Vagina (tissue), 2 donors: ENCODE measurements at regions of chr12 and their contacts with region 1.

Region 1: GRCh38 chr12:8081251-8081920 is 688 bp upstream of the NECAP1 start:
- DNase-seq: no peak
- H3K4me3 ChIP-seq: peak overlapping the region; percentile 92 to 94
- H3K27ac ChIP-seq: peak overlapping the region; percentile 96
- H3K4me1 ChIP-seq: peaks cover 33% of the 10 kb centered on the region
- H3K27me3 ChIP-seq: no peaks in the 10 kb centered on the region
- CTCF ChIP-seq: no peak
- POLR2A ChIP-seq: no peak

Region 2: GRCh38 chr12:8032242-8033152 is 48.9 kb before region 1 on chr12 and contains the start of gene FOXJ2:
- intact Hi-C with region 1: loop called (anchors 10 kb)
- DNase-seq: no peak
- H3K4me3 ChIP-seq: peak within 1 kb of the TSS; percentile 90 to 97
- H3K27ac ChIP-seq: peak within 1 kb of the TSS; percentile 97
- H3K4me1 ChIP-seq: peaks cover 53% of the 10 kb centered on the region
- H3K27me3 ChIP-seq: no peaks in the 10 kb centered on the region
- CTCF ChIP-seq: no peak
- POLR2A ChIP-seq: peak in 1 of 2 donors; percentile 77
- total RNA-seq, gene FOXJ2: 24.8 TPM

Region 3: GRCh38 chr12:8052679-8053078 is 28.7 kb before region 1 on chr12:
- intact Hi-C with region 1: no loop called
- DNase-seq: no peak
- H3K4me3 ChIP-seq: no peak overlapping the region
- H3K27ac ChIP-seq: no peak overlapping the region
- H3K4me1 ChIP-seq: no peaks in the 10 kb centered on the region
- H3K27me3 ChIP-seq: no peaks in the 10 kb centered on the region
- CTCF ChIP-seq: no peak
- POLR2A ChIP-seq: no peak